PC-3 (cell line): ENCODE measurements at regions of chr9 and their contacts with region 1.

Region 1: DNA sequence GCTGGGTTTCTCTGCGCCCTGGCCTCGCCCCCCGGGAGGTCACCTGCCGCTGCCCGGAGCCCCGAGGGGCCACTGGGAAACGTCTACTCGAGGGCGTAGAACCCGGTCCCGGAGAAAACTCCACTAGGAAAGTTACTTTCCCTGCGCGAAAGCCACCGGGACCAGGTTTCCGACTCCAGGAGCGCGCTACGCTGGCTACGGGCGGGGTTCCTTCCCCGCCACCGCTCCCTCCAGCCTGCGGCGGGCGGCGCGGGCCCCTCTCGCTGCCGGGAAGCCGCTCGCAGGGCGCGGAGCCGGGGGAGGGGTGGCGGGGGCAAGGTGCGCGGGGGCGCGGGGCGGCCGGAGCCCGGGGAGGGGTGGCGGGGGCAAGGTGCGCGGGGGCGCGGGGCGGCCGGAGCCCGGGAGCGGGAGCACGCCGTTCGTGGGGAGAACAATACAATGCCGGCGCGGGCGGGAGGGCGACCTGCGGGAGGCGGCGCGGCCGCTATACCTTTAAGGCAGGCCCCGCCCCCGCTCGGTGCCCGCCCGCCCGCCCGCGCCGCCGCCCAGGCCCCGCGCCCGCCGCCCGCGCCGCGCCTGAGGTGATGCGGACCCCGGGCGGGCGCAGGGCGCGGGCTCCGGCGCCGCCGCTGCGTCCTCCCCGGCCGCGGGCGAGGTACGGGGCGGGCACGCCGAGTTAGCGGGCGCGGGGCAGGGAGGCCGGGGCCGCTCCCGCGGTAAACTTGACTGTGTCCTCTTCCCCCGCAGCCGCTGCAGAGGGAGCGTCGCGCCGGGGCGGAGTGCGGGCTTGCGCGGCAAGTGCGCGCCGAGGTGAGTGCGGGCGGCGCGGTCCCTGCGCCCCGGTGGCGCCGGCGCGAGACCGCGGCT is 278.1 kb downstream of the AOPEP start:
- DNase-seq: peak; percentile 36
- ATAC-seq: peak; percentile 64
- H3K4me3 ChIP-seq: peak overlapping the region; percentile 87
- H3K27ac ChIP-seq: peak overlapping the region; percentile 81
- H3K4me1 ChIP-seq: peaks cover 33% of the 10 kb centered on the region
- H3K27me3 ChIP-seq: no peaks in the 10 kb centered on the region
- CTCF ChIP-seq: no peak

Region 2: GRCh38 chr9:94593459-94594345 is 410.9 kb before region 1 on chr9 and contains the start of gene FBP2:
- CTCF ChIA-PET with region 1: no interaction called
- POLR2A ChIA-PET with region 1: no interaction called
- intact Hi-C with region 1: no loop called
- DNase-seq: no peak
- ATAC-seq: no peak
- H3K4me3 ChIP-seq: no peak within 1 kb of the TSS
- H3K27ac ChIP-seq: no peak within 1 kb of the TSS
- H3K4me1 ChIP-seq: no peaks in the 10 kb centered on the region
- H3K27me3 ChIP-seq: no peaks in the 10 kb centered on the region
- CTCF ChIP-seq: no peak
- total RNA-seq, gene FBP2: not detected in 2 replicates

Region 3: DNA sequence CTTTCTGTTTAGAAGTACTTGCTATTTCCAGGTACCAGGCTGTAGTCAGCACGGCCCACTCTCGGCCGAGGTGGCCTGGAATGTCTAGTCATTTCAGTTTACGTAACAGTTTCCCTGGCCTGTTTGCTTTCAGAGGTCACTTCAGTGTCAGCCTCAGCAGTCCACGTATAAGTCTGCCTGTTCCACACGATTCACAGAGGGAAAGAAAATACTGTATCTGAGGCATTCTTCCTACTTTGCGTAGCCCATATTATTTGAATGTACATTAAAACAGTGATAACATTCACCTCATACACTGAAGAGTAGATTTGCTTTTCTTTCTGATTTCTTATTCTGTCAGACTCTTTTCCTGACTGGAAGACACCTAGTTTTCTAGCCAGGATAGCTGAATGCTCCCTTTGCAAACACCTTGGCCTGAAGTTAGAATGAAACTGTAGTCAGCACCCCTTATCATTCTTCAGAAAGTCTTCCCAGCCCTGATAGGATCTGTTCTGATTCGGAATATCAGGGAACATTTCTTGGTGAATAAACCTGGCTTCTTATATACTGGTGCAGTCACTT is 137.3 kb before region 1 on chr9:
- CTCF ChIA-PET with region 1: no interaction called
- POLR2A ChIA-PET with region 1: no interaction called
- intact Hi-C with region 1: loop called (anchors 2 kb)
- DNase-seq: peak; percentile 79
- ATAC-seq: peak; percentile 48
- H3K4me3 ChIP-seq: peak overlapping the region; percentile 52
- H3K27ac ChIP-seq: peak overlapping the region; percentile 99
- H3K4me1 ChIP-seq: peaks cover 68% of the 10 kb centered on the region
- H3K27me3 ChIP-seq: no peaks in the 10 kb centered on the region
- CTCF ChIP-seq: no peak

Region 4: GRCh38 chr9:94912700-94913249 is 91.9 kb before region 1 on chr9:
- CTCF ChIA-PET with region 1: no interaction called
- POLR2A ChIA-PET with region 1: interaction called, 3 read pairs
- intact Hi-C with region 1: loop called (anchors 2 kb)
- DNase-seq: peak; percentile 94
- ATAC-seq: peak; percentile 71
- H3K4me3 ChIP-seq: peak overlapping the region; percentile 7
- H3K27ac ChIP-seq: peak overlapping the region; percentile 74
- H3K4me1 ChIP-seq: peaks cover 59% of the 10 kb centered on the region
- H3K27me3 ChIP-seq: no peaks in the 10 kb centered on the region
- CTCF ChIP-seq: no peak

Region 5: DNA sequence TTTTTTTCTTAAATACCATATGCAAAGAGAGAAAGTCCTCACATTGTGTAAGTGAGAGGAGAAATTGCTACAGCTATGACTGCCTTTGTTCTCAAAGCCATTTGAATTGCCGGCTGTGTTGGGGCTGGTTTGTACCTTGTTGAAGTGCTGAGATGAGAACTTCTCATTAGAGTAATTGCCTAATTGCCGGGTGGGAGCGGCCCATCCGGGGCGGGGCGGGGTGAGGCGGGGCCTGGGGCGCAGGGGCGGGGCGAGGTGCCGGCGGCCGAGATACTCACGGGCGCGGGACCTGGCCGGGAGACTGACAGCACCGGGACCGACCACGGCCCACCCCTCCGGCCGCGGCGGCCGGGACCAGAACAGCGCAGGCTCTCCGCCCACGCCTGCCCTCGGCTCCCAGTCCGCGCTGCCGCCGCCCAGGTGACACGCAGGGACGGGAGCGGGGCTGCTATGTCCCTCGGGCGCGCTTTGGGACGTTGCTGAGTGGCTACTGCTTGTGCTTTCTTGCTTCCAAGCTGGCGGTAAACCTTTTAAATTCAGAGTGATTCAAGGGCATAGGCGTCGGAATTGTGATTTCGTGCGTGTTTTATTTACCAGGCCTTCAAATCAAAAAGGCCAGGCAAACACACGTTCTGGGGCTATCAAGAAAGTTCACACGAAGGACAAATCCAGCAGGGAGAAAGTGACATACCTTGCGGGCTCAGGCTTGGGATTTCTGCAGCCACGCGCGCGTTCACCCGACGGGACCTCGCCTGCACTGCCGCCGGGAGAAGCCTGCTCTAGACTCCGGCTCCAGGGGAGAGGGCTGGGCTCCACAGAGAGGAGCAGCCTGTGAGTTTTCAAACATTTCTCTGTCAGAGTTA is 43.8 kb after region 1 on chr9:
- CTCF ChIA-PET with region 1: no interaction called
- POLR2A ChIA-PET with region 1: no interaction called
- intact Hi-C with region 1: loop called (anchors 5 kb)
- DNase-seq: peak; percentile 49
- ATAC-seq: peak; percentile 91
- H3K4me3 ChIP-seq: peak overlapping the region; percentile 92
- H3K27ac ChIP-seq: peak overlapping the region; percentile 70
- H3K4me1 ChIP-seq: peaks cover 21% of the 10 kb centered on the region
- H3K27me3 ChIP-seq: no peaks in the 10 kb centered on the region
- CTCF ChIP-seq: no peak

Region 6: DNA sequence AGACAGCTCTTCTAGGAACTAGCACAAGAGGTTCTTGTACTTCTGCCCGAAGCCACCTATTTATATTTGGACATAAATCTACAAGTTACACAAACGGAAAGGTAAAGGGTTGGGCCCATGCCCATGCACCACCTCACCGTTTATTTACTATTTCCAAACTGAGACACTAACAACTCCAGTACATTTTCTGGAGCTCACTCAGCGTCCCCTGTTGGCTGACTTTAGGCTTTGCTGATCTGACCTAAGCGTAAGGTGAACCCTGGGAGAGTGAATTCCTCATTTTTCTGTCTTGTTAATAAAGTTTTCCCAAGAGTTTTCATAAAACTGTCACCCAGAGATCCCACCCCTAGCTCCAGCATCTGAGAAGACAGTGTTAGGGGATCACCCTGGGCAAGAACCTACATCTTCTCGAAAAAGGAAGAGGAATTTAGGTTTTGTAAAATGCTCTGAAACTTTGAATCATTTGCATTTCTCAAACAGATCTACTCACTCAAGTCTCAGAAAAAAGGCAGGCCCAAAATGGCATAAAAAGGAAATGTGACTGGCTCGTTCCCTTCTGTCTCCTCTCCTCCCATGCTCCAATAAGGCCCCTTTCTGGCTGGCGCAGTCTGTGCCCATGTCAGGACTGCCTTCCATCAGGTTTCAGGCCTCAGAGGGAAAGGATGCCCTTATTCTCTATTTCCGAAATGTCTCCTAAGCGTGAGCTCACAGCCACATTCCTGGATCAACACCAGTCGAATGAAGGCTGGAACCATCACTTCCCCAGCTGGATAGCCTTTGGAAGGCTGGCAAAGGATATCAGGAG is 111.6 kb after region 1 on chr9:
- CTCF ChIA-PET with region 1: no interaction called
- POLR2A ChIA-PET with region 1: no interaction called
- intact Hi-C with region 1: loop called (anchors 5 kb)
- DNase-seq: peak; percentile 80
- ATAC-seq: peak; percentile 90
- H3K4me3 ChIP-seq: no peak overlapping the region
- H3K27ac ChIP-seq: peak overlapping the region; percentile 45
- H3K4me1 ChIP-seq: peaks cover 20% of the 10 kb centered on the region
- H3K27me3 ChIP-seq: no peaks in the 10 kb centered on the region
- CTCF ChIP-seq: peak; percentile 86